PC-3 (cell line): ENCODE measurements at regions of chr1 and their contacts with region 1.

Region 1: DNA sequence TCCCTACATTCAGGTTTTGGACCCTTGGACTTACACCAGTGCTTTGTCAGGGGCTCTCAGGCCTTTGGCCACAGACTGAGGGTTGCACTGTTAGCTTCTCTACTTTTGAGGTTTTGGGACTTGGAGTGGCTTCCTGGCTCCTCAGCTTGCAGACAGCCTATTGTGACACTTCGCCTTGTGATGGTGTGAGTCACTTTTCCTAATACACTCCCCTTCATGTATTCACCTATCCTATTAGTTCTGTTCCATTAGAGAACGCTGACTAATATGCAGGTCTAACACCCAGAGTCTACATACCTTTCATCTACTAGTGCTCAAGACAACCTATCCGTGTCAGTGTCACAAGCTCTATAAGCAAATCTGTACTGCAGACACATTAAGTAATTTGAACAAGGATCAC is 605.3 kb downstream of the KCNT2 start:
- DNase-seq: peak; percentile 72
- ATAC-seq: peak; percentile 89
- H3K4me3 ChIP-seq: no peak overlapping the region
- H3K27ac ChIP-seq: peak overlapping the region; percentile 73
- H3K4me1 ChIP-seq: peaks cover 24% of the 10 kb centered on the region
- H3K27me3 ChIP-seq: no peaks in the 10 kb centered on the region
- CTCF ChIP-seq: no peak

Region 2: DNA sequence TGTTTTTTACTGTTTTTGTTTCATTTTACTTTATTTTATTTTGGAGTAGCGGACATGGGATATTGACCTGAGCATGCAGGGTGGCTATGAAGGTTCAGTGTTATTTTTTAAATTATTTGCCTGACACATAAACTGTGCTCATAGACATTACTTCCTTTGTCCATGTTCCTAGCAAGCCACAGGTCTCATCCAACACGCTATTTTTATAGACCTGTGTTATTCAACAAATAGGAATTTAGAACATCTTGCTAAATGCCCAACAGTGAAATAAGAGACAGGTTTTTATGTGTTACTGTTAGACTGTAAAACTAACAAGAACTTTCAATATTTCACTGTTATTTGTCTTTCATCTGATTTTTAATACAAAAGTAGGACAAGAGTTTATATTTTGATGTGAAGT is 151.1 kb before region 1 on chr1:
- CTCF ChIA-PET with region 1: no interaction called
- POLR2A ChIA-PET with region 1: no interaction called
- intact Hi-C with region 1: loop called (anchors 10 kb)
- DNase-seq: peak; percentile 58
- ATAC-seq: peak; percentile 81
- H3K4me3 ChIP-seq: no peak overlapping the region
- H3K27ac ChIP-seq: peak overlapping the region; percentile 35; the same call in 1 of the 2 replicates
- H3K4me1 ChIP-seq: peaks cover 15% of the 10 kb centered on the region
- H3K27me3 ChIP-seq: no peaks in the 10 kb centered on the region
- CTCF ChIP-seq: no peak